Activated CD4-positive, alpha-beta memory T cell treated with anti-CD3 and anti-CD28 coated beads for 36 hours (primary cell): ENCODE measurements at regions of chr2 and their contacts with region 1.

Region 1: GRCh38 chr2:233053928-233054784 is 6.0 kb upstream of the INPP5D start:
- DNase-seq: peak; percentile 83
- H3K4me3 Mint-ChIP-seq: no peak overlapping the region
- H3K27ac Mint-ChIP-seq: no peak overlapping the region
- H3K4me1 Mint-ChIP-seq: peaks cover 7% of the 10 kb centered on the region
- H3K27me3 Mint-ChIP-seq: peaks cover 2% of the 10 kb centered on the region

Region 2: GRCh38 chr2:232854082-232854481 is 200.1 kb before region 1 on chr2:
- CTCF ChIA-PET with region 1: interaction called, 37 read pairs
- POLR2A ChIA-PET with region 1: no interaction called
- intact Hi-C with region 1: loop called (anchors 5 kb)
- DNase-seq: no peak
- H3K4me3 Mint-ChIP-seq: no peak overlapping the region
- H3K27ac Mint-ChIP-seq: no peak overlapping the region
- H3K4me1 Mint-ChIP-seq: peaks cover 4% of the 10 kb centered on the region
- H3K27me3 Mint-ChIP-seq: no peaks in the 10 kb centered on the region

Region 3: GRCh38 chr2:233033672-233034071 is 20.5 kb before region 1 on chr2:
- CTCF ChIA-PET with region 1: interaction called, 13 read pairs
- POLR2A ChIA-PET with region 1: no interaction called
- intact Hi-C with region 1: no loop called
- DNase-seq: peak; percentile 61
- H3K4me3 Mint-ChIP-seq: no peak overlapping the region
- H3K27ac Mint-ChIP-seq: no peak overlapping the region
- H3K4me1 Mint-ChIP-seq: peaks cover 11% of the 10 kb centered on the region
- H3K27me3 Mint-ChIP-seq: no peaks in the 10 kb centered on the region

Region 4: GRCh38 chr2:233084488-233084887 is 30.3 kb after region 1 on chr2:
- CTCF ChIA-PET with region 1: interaction called, 66 read pairs
- POLR2A ChIA-PET with region 1: no interaction called
- intact Hi-C with region 1: no loop called
- DNase-seq: peak; percentile 83
- H3K4me3 Mint-ChIP-seq: peak overlapping the region; percentile 70
- H3K27ac Mint-ChIP-seq: peak overlapping the region; percentile 98
- H3K4me1 Mint-ChIP-seq: peaks cover 84% of the 10 kb centered on the region
- H3K27me3 Mint-ChIP-seq: no peaks in the 10 kb centered on the region

Region 5: GRCh38 chr2:233129351-233129987 is 75.3 kb after region 1 on chr2:
- CTCF ChIA-PET with region 1: interaction called, 13 read pairs
- POLR2A ChIA-PET with region 1: no interaction called
- intact Hi-C with region 1: no loop called
- DNase-seq: peak; percentile 24
- H3K4me3 Mint-ChIP-seq: no peak overlapping the region
- H3K27ac Mint-ChIP-seq: peak overlapping the region; percentile 6
- H3K4me1 Mint-ChIP-seq: peaks cover 19% of the 10 kb centered on the region
- H3K27me3 Mint-ChIP-seq: no peaks in the 10 kb centered on the region